WTC11 (cell line): ENCODE measurements at regions of chr1 and their contacts with region 1.

Region 1: DNA sequence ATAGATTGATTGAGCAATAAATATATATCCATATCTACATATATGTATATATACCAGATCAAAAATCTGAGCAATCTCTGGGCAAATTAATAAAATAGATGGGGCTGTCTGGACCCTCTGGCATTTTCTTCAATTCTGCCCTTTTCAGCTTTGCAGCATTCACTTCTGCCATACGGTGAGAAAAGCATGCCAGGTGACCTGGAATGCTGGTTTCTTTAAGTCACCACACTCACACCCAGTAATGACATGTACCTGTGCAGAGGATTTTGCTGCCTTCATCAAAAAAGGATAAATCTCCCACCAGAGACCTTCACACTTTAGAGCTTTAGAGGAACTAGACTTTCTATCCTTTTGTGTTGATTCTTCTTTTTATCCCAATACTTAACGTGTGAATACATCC is 223.2 kb upstream of the NFIA start:
- DNase-seq: no peak
- ATAC-seq: no peak
- H3K4me3 Mint-ChIP-seq: no peak overlapping the region
- H3K27ac Mint-ChIP-seq: no peak overlapping the region
- H3K4me1 Mint-ChIP-seq: peaks cover 50% of the 10 kb centered on the region
- H3K27me3 Mint-ChIP-seq: peaks cover 10% of the 10 kb centered on the region
- CTCF ChIP-seq: no peak

Region 2: GRCh38 chr1:60848583-60849188 is 10.4 kb before region 1 on chr1:
- CTCF ChIA-PET with region 1: interaction called, 25 read pairs
- POLR2A ChIA-PET with region 1: interaction called, 3 read pairs
- DNase-seq: no peak
- ATAC-seq: peak; percentile 78
- H3K4me3 Mint-ChIP-seq: no peak overlapping the region
- H3K27ac Mint-ChIP-seq: peak overlapping the region; percentile 30
- H3K4me1 Mint-ChIP-seq: peaks cover 23% of the 10 kb centered on the region
- H3K27me3 Mint-ChIP-seq: no peaks in the 10 kb centered on the region
- CTCF ChIP-seq: peak; percentile 61